MCF 10A (cell line): ENCODE measurements at regions of chr7 and their contacts with region 1.

Region 1: DNA sequence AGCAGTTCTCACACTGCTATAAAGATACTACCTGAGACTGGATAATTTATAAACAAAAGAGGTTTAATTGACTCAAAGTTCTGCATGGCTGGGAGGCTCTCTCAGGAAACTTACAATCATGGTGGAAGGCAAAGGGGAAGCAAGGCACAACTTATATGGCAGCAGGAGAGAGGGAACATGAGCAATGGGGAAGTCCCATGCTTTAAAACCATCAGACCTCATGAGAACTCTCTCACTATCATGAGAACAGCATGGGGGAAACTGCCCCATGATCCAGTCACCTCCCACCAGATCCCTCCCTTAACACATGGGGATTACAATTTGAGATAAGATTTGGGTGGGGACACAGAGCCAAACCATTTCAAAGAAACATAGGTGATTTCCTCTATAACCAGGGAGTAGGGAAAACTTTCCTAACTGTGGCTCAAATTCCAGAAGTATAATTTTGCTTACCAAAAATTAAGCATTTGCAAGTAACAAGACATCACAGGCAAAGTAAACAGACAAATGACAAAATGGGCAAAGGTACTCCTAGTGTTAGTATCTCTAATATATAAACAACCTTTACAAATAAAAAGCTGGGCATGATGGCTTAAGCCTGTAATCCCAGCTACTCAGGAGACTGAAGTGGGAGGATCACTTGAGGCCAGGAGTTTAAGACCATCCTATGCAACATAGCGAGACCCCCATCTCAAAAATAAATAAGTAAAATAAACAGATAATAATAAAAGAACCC is 88.0 kb downstream of the KBTBD2 start:
- DNase-seq: no peak
- H3K4me3 Mint-ChIP-seq: no peak overlapping the region
- H3K27ac Mint-ChIP-seq: no peak overlapping the region
- H3K4me1 Mint-ChIP-seq: no peaks in the 10 kb centered on the region
- H3K27me3 Mint-ChIP-seq: no peaks in the 10 kb centered on the region
- CTCF ChIP-seq: no peak

Region 2: DNA sequence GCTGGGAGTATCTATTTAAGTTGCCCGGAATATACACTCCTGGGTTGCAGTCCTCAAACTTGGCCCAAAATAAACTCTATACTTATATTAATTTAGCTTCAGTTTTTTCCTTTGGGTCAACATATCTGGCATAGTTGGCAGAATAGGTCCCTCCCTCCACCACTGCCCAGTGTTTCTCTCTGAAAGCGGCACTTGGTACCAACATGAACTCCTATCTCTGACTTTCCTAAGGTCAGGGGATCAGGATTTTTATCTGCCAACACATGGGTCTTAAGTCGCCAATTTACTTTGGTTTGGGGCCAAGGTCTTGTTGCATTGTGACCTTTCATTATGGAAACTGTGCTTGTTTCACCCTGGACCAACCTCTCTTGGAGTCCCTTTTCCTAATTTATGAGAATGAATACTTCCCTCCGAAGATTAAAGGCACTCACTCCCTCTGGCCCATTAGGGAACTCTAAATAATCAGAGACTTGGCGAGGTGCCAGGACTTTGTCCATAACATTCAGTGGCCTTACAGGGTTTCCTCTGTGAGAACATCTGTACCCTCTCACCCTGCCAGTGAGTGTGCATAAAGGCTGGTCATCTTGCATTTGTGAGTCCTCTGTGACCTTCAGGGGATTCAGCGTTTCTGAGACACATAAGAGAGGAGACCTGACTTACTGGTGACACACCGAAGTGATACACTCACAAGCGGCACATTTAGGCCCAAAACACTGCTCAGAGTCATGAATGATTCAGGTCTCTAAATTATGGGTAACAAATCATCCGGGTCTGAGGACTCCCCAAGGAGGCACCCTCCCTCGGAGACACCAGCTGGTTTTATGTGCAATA is 134.0 kb after region 1 on chr7:
- CTCF ChIA-PET with region 1: interaction called, 40 read pairs
- POLR2A ChIA-PET with region 1: no interaction called
- intact Hi-C with region 1: no loop called
- DNase-seq: peak; percentile 23
- H3K4me3 Mint-ChIP-seq: no peak overlapping the region
- H3K27ac Mint-ChIP-seq: no peak overlapping the region
- H3K4me1 Mint-ChIP-seq: peaks cover 22% of the 10 kb centered on the region
- H3K27me3 Mint-ChIP-seq: no peaks in the 10 kb centered on the region
- CTCF ChIP-seq: no peak

Region 3: DNA sequence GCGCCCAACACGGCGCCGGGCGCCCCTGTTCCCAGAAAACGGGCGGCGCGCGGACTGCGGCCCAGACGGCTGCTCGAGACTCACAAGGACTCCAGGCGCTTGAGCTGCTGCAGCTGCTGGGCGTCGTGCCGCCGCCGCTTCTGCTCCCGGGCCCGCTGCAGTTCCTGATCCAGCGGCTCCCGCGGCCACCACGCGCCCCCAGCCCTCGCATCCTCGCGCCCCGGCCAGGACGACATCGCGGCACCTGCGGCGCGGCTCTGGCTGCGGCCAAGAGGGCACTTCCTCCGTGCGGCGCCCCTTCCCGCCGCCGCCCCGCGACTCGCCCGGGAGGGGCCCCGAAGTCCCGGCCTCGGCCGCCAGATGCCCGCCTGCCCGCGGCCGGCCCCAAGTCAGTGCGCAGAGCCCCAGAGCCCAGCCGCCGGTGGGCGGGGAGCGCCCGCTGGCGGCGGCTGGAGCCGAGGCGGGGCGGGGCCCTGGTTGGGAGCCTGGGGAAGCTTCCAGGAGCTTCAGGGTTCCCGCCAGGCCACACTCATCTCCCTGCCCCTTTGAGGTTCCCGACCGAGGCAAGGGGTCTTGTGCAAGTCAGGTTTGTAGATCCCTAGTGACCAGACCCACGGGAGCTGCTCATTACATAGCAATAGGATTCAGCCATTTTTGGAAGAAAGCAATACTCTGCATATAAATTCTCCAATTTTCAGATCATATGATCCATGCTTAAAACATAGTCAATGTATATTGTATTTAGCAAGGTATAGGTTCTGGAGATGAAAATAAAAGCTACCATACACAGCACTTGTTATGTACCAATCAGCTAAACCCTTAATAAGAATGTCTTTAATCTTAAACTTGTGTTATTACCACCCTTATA is 139.4 kb after region 1 on chr7:
- CTCF ChIA-PET with region 1: interaction called, 40 read pairs
- POLR2A ChIA-PET with region 1: no interaction called
- intact Hi-C with region 1: loop called (anchors 1 kb)
- DNase-seq: peak; percentile 80
- H3K4me3 Mint-ChIP-seq: peak overlapping the region; percentile 85
- H3K27ac Mint-ChIP-seq: peak overlapping the region; percentile 83
- H3K4me1 Mint-ChIP-seq: peaks cover 22% of the 10 kb centered on the region
- H3K27me3 Mint-ChIP-seq: no peaks in the 10 kb centered on the region
- CTCF ChIP-seq: peak; percentile 28

Region 4: GRCh38 chr7:33300131-33300530 is 496.6 kb after region 1 on chr7:
- CTCF ChIA-PET with region 1: no interaction called
- POLR2A ChIA-PET with region 1: no interaction called
- intact Hi-C with region 1: no loop called
- DNase-seq: no peak
- H3K4me3 Mint-ChIP-seq: no peak overlapping the region
- H3K27ac Mint-ChIP-seq: no peak overlapping the region
- H3K4me1 Mint-ChIP-seq: no peaks in the 10 kb centered on the region
- H3K27me3 Mint-ChIP-seq: no peaks in the 10 kb centered on the region
- CTCF ChIP-seq: no peak

Region 5: DNA sequence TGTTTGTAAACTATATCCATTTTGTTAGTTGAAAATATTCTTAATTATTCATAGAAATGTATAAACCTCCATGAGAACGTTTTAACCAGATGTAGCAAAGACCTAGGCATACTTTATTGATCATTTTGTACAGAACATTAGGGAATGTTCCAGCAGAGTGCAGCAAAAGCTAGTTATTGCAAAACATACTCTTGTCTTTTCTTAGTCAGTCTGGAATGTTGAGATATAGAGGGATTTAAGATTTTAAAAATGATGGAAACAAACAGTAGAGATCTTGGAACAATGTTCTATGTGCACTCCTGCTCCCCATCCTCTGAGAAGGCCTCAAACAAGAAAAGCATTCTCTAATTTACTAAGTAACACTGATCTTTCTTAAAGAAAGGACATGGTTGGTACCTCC is 617.9 kb after region 1 on chr7:
- CTCF ChIA-PET with region 1: no interaction called
- POLR2A ChIA-PET with region 1: no interaction called
- intact Hi-C with region 1: no loop called
- DNase-seq: no peak
- H3K4me3 Mint-ChIP-seq: no peak overlapping the region
- H3K27ac Mint-ChIP-seq: no peak overlapping the region
- H3K4me1 Mint-ChIP-seq: no peaks in the 10 kb centered on the region
- H3K27me3 Mint-ChIP-seq: no peaks in the 10 kb centered on the region
- CTCF ChIP-seq: no peak